Activated CD8-positive, alpha-beta T cell treated with anti-CD3 and anti-CD28 coated beads for 36 hours (primary cell): ENCODE measurements at regions of chr5 and their contacts with region 1.

Region 1: DNA sequence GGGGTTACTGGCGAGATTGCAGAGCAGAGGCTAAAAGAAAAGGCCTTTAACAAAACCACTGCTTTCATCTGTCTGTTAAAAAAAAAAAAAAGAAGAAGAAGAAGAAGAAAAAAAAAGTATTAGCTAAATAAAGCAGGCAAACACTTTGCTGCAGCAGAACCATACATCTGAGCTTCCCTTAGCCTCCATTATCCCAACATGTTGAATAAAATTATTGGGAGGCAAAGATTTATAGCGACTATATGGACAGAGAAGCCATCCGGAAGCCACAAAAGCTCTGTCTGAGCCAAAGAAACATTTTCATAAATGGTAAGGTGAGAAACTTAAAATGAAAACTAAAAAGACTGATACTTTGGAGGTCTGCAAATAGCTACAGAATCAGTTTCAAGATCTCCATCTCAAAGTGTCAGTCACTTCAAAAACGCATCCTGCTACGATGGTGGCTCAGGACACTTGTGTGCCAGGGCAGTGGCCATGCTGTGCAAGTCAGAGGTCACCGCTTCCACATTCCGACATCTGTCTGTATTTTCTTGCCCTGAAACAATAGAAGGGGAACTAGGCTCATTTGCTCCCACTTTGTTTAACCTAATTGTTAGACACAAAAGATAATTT is 9.6 kb downstream of the EFNA5 start:
- DNase-seq: no peak
- ATAC-seq: no peak
- H3K4me3 Mint-ChIP-seq: no peak overlapping the region
- H3K27ac Mint-ChIP-seq: no peak overlapping the region
- H3K4me1 Mint-ChIP-seq: no peaks in the 10 kb centered on the region
- H3K27me3 Mint-ChIP-seq: peaks cover 12% of the 10 kb centered on the region
- CTCF ChIP-seq: no peak

Region 2: DNA sequence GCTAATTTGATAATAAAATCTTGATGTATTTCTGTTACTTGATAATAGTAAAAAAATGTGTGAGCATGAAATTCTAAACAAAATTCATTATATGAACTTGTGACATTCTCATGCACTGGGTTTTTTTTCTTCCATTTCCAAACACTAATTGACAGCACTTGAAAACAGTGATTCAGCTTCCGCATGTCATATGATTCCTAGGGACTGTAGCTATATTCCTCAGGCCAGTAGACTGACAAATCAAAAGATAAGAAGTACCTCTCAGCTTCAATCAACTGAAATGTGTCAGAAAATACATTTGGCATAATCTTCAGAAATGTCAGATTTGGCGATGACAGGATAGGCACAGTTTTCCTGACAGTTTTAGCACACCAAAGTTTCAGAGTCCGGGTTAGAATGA is 42.9 kb before region 1 on chr5:
- CTCF ChIA-PET with region 1: no interaction called
- POLR2A ChIA-PET with region 1: no interaction called
- intact Hi-C with region 1: no loop called
- DNase-seq: no peak
- ATAC-seq: no peak
- H3K4me3 Mint-ChIP-seq: no peak overlapping the region
- H3K27ac Mint-ChIP-seq: no peak overlapping the region
- H3K4me1 Mint-ChIP-seq: no peaks in the 10 kb centered on the region
- H3K27me3 Mint-ChIP-seq: peaks cover 2% of the 10 kb centered on the region
- CTCF ChIP-seq: no peak

Region 3: GRCh38 chr5:107633171-107633901 is 27.8 kb before region 1 on chr5:
- CTCF ChIA-PET with region 1: no interaction called
- POLR2A ChIA-PET with region 1: no interaction called
- intact Hi-C with region 1: no loop called
- DNase-seq: no peak
- ATAC-seq: no peak
- H3K4me3 Mint-ChIP-seq: no peak overlapping the region
- H3K27ac Mint-ChIP-seq: no peak overlapping the region
- H3K4me1 Mint-ChIP-seq: no peaks in the 10 kb centered on the region
- H3K27me3 Mint-ChIP-seq: peaks cover 14% of the 10 kb centered on the region
- CTCF ChIP-seq: no peak

Region 4: GRCh38 chr5:107673368-107674136 is 12.4 kb after region 1 on chr5:
- CTCF ChIA-PET with region 1: interaction called, 22 read pairs
- POLR2A ChIA-PET with region 1: no interaction called
- intact Hi-C with region 1: no loop called
- DNase-seq: peak; percentile 85
- ATAC-seq: peak; percentile 76
- H3K4me3 Mint-ChIP-seq: peak overlapping the region; percentile 65
- H3K27ac Mint-ChIP-seq: no peak overlapping the region
- H3K4me1 Mint-ChIP-seq: peaks cover 28% of the 10 kb centered on the region
- H3K27me3 Mint-ChIP-seq: peaks cover 54% of the 10 kb centered on the region
- CTCF ChIP-seq: peak; percentile 97